Activated CD4-positive, alpha-beta T cell treated with anti-CD3 and anti-CD28 coated beads, Interleukin-2, amount 10 ng/mL, durations not matched to agents 7 days and 5 days (primary cell): ENCODE measurements at regions of chr7 and their contacts with region 1.

Region 1: DNA sequence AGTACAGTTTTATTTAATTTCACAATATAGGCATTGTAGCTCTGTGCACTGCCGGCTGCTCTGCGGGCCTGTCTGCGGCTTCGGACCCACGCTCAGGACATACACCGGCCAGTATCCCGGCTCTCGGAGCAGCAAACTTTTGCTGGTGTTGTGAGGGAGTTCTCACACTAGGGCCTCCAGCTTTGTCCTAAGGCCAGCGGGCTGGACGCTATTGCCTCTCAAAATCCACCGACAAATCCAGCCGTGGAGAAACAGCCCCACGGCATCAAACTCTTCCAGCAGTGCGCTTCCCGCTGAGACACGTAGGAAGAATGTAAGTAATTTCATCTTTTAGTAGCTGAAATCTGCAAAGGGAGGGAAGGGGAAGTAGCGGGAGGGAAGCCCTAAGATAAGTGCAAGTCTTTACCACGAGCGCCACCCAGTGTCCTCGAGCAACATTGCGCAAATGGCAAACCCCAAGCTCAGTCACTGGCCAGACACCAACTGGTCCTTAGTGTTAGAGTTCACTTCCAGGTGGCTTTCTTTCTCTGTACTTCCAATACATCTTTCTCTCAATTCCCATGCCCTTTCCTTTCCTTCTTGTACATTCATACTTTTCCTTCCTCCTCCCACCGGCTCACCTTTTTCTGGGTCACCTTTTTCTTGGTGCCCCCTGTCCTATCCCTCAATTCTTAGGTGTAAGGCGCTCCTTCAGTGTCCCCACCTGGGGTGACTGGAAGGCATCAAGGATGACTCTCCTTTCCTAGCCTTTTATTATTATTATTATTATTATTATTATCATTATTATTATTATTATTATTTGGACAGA is 3.0 kb upstream of the DLX5 start:
- DNase-seq: peak; percentile 70
- H3K4me3 Mint-ChIP-seq: peak overlapping the region; percentile 53
- H3K27ac Mint-ChIP-seq: no peak overlapping the region
- H3K4me1 Mint-ChIP-seq: peaks cover 31% of the 10 kb centered on the region
- H3K27me3 Mint-ChIP-seq: peaks cover 70% of the 10 kb centered on the region

Region 2: DNA sequence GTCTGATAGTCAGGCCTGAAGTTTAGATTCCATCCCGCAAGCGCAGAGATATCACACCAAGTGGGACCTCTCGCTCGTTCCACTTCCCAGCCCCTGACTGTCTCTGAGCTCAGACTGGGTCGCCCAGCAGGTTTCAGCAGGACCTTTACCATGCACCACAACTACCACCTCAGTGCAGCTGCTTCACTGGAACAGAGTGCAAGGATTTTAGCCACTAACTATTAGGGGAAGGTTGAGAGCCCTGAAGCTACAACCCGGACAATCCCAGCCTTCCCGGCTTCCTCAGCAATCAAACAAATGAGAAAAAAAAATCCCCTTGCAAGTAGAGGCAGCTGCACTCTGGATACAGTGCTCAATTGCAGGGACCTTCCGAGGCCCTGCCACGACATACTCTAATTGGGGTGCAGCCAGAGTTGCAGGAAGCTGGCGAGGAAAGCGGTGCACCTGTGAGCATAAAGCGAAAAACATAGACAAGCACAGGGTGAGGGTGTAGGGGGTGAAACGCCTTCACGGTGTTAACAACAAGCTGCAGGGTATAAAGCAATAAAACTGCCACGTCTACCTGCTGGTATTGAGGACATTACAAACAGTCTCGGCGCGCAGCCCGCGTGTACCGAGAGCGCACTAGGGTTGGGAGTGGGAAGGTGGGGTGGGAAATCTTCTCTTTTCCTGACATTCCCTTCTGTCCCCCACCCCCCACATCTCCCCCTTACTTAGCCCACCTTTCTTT is 24.9 kb before region 1 on chr7:
- CTCF ChIA-PET with region 1: interaction called, 13 read pairs
- POLR2A ChIA-PET with region 1: no interaction called
- DNase-seq: no peak
- H3K4me3 Mint-ChIP-seq: peak overlapping the region; percentile 22
- H3K27ac Mint-ChIP-seq: peak overlapping the region; percentile 13
- H3K4me1 Mint-ChIP-seq: peaks cover 9% of the 10 kb centered on the region
- H3K27me3 Mint-ChIP-seq: peaks cover 88% of the 10 kb centered on the region

Region 3: DNA sequence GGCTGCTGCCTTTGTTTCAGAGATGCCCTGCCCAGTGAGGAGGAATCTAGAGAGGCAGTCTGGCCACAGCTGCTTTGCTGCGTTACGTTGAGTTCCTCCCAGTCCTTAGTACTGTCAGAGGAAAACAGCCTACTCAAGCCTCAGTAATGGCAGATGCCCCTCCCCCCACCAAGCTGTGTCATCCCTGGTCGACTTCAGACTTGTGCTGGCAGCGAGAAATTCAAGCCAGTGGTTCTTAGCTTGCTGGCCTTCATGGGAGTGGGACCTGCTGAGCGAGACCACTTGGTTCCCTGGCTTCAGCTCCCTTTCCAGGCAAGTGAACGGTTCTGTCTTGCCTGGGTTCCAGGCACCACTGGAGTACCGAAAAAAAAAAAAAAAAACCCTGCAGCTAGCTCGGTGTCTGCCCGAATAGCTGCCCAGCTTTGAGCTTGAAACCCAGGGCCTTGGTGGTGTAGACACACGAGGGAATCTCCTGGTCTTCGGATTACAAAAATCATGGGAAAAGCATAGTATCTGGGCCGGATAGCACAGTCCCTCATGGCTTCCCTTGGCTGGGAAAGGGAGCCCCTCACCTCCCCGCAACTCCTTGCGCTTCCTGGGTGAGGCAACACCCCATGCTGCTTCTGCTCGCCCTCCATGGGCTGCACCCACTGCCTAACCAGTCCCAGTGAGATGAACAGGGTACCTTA is 99.0 kb after region 1 on chr7:
- CTCF ChIA-PET with region 1: no interaction called
- POLR2A ChIA-PET with region 1: no interaction called
- DNase-seq: no peak
- H3K4me3 Mint-ChIP-seq: no peak overlapping the region
- H3K27ac Mint-ChIP-seq: no peak overlapping the region
- H3K4me1 Mint-ChIP-seq: peaks cover 3% of the 10 kb centered on the region
- H3K27me3 Mint-ChIP-seq: no peaks in the 10 kb centered on the region